Transverse colon (tissue), 4 donors: ENCODE measurements at regions of chr11 and their contacts with region 1.

Region 1: GRCh38 chr11:94973099-94973968 is at the starts of genes CWC15 and KDM4D:
- DNase-seq: peak; percentile 95
- H3K4me3 ChIP-seq: peak within 1 kb of the TSS; percentile 62 to 96 (median 90)
- H3K27ac ChIP-seq: peak within 1 kb of the TSS; percentile 81 to 91 (median 86)
- H3K4me1 ChIP-seq: peaks cover 5 to 20% (median 12%) of the 10 kb centered on the region in 4 donors
- H3K27me3 ChIP-seq: no peaks in the 10 kb centered on the region
- CTCF ChIP-seq: no peak
- EP300 ChIP-seq: no peak
- POLR2A ChIP-seq: peak; percentile 52
- total RNA-seq, gene CWC15: 26.2 to 55.9 (median 46.2) TPM
- total RNA-seq, gene KDM4D: 0.27 to 3.0 (median 0.32) TPM in 3 of 4 donors, not detected in the other

Region 2: DNA sequence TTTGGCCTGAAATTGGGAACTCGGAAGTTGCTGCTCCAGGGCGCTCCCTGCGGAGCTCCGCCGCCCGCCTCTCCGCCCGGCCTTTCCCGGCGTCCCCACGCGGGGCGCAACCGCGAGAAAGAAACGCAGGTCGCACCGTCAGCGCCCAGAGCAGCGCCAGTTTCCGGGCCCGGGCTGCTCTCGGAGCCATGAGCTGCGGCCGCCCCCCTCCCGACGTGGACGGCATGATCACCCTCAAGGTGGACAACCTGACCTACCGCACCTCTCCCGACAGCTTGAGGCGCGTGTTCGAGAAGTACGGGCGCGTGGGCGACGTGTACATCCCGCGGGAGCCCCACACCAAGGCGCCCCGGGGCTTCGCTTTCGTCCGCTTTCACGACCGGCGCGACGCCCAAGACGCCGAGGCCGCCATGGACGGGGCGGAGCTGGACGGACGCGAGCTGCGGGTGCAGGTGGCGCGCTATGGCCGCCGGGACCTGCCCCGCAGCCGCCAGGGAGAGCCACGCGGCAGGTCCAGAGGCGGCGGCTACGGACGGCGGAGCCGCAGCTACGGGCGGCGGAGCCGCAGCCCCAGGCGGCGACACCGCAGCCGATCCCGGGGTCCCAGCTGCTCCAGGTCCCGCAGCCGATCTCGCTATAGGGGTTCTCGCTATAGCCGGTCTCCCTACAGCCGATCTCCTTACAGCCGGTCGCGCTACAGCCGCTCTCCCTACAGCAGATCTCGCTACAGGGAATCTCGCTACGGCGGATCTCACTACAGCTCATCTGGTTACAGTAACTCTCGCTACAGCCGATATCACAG is 93.9 kb after region 1 on chr11:
- in situ Hi-C with region 1: loop called in 2 of 4 experiments (anchors 10 kb)
- intact Hi-C with region 1: no loop called
- DNase-seq: peak; percentile 85
- H3K4me3 ChIP-seq: peak overlapping the region; percentile 58 to 85 (median 78)
- H3K27ac ChIP-seq: peak overlapping the region; percentile 94 to 99 (median 98)
- H3K4me1 ChIP-seq: peaks cover 3 to 17% (median 15%) of the 10 kb centered on the region in 4 donors
- H3K27me3 ChIP-seq: no peaks in the 10 kb centered on the region
- CTCF ChIP-seq: peak; percentile 54 to 77 (median 64)
- EP300 ChIP-seq: no peak
- POLR2A ChIP-seq: peak; percentile 84